ENCODE measurements at regions of chr20 and their contacts with region 1.

Region 1: GRCh38 chr20:59094576-59094975 is 52.0 kb upstream of the PRELID3B start:
- DNase-seq: no peak
- H3K4me3 Mint-ChIP-seq: no peak overlapping the region
- H3K27ac Mint-ChIP-seq: no peak overlapping the region
- H3K4me1 Mint-ChIP-seq: no peaks in the 10 kb centered on the region
- H3K27me3 Mint-ChIP-seq: peaks cover 5% of the 10 kb centered on the region

Region 2: DNA sequence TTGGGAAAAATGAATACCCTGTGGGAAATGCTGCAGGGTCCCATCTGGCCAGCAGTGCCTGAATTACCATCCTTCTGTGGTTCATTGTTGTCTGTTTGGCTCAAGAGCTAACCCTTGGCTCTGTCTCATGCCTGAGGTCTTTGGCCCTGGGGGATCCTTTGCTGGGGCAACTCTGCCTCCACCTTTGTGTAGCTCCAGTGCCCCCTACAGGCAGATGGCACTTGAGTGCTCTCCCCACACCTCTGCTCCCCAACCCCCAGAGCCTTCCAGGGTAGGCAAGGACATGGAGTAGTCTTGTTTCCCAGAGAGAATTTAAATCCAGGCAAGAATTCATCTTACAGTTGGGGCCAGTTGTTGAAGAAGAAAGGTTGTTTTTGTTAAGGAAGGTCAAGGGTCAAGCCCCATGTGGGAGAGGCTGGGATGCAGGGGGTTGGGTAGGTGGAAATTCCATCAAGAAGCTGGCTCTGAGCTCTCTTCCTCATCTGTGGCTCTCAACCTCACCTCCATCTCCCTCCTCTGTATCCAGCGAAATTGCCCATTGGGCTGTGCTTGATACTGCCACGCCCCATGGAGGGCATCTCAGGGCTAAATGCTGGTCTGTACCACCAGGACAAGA is 113.3 kb after region 1 on chr20:
- CTCF ChIA-PET with region 1: interaction called, 137 read pairs
- POLR2A ChIA-PET with region 1: no interaction called
- DNase-seq: peak; percentile 80
- H3K4me3 Mint-ChIP-seq: no peak overlapping the region
- H3K27ac Mint-ChIP-seq: no peak overlapping the region
- H3K4me1 Mint-ChIP-seq: peaks cover 2% of the 10 kb centered on the region
- H3K27me3 Mint-ChIP-seq: no peaks in the 10 kb centered on the region

Region 3: GRCh38 chr20:59222253-59223181 is 127.9 kb after region 1 on chr20:
- CTCF ChIA-PET with region 1: interaction called, 55 read pairs
- POLR2A ChIA-PET with region 1: no interaction called
- DNase-seq: peak; percentile 80
- H3K4me3 Mint-ChIP-seq: peak overlapping the region; percentile 69
- H3K27ac Mint-ChIP-seq: no peak overlapping the region
- H3K4me1 Mint-ChIP-seq: peaks cover 9% of the 10 kb centered on the region
- H3K27me3 Mint-ChIP-seq: no peaks in the 10 kb centered on the region

Measured in activated CD4-positive, alpha-beta memory T cell treated with anti-CD3 and anti-CD28 coated beads, Interleukin-2, amount 10 ng/mL, durations not matched to agents 7 days and 5 days (primary cell).